GM12878 (cell line): ENCODE measurements at regions of chr4 and their contacts with region 1.

Region 1: GRCh38 chr4:53804719-53805118 is 213.4 kb upstream of the LNX1 start:
- DNase-seq: peak; percentile 12
- ATAC-seq: peak; percentile 98
- H3K4me3 ChIP-seq: no peak overlapping the region
- H3K27ac ChIP-seq: no peak overlapping the region
- H3K4me1 ChIP-seq: 0 out of 2 replicates have a peak, but pooled peaks cover 3% of the 10 kb centered on the region
- H3K27me3 ChIP-seq: no peaks in the 10 kb centered on the region
- CTCF ChIP-seq: peak; percentile 65 to 74 (median 72)
- EP300 ChIP-seq: no peak
- POLR2A ChIP-seq: no peak
- RAD21 ChIP-seq: peak; percentile 77

Region 2: DNA sequence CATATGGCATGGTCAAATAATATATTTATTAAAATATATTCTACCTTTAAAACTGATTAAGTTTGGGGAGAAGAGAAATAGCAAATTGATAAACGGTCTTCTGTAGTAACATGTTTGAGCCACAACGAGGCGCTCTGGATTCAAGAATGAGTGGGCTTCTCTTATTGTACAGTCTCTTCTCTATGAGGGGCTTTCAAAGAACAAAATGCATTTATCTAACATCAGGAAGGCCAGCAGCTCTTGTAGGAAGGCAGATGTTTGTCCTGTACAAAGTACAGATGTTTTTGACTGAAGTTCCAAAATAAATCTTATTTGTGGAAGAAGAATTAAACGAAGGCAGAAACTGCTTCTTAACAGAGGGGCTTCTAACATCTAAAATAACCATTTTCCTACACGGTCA is 789.0 kb before region 1 on chr4:
- CTCF ChIA-PET with region 1: interaction called, 15 read pairs
- POLR2A ChIA-PET with region 1: no interaction called
- RAD21 ChIA-PET with region 1: interaction called, 4 read pairs
- SMC1A ChIA-PET with region 1: interaction called, 5 read pairs
- in situ Hi-C with region 1: no loop called
- intact Hi-C with region 1: loop called (anchors 10 kb)
- DNase-seq: no peak
- ATAC-seq: 0 out of 3 replicates have a peak, but pooled peaks have one; percentile 25
- H3K4me3 ChIP-seq: no peak overlapping the region
- H3K27ac ChIP-seq: no peak overlapping the region
- H3K4me1 ChIP-seq: peaks cover 8% of the 10 kb centered on the region; the same call in 1 of the 2 replicates
- H3K27me3 ChIP-seq: no peaks in the 10 kb centered on the region
- CTCF ChIP-seq: peak; percentile 47 to 67 (median 55)
- EP300 ChIP-seq: no peak
- POLR2A ChIP-seq: no peak
- RAD21 ChIP-seq: peak; percentile 83

Region 3: GRCh38 chr4:53507671-53508286 is 296.9 kb before region 1 on chr4:
- CTCF ChIA-PET with region 1: interaction called, 12 read pairs
- POLR2A ChIA-PET with region 1: no interaction called
- RAD21 ChIA-PET with region 1: interaction called, 10 read pairs
- SMC1A ChIA-PET with region 1: interaction called, 8 read pairs
- in situ Hi-C with region 1: no loop called
- intact Hi-C with region 1: no loop called
- DNase-seq: no peak
- ATAC-seq: peak; percentile 80
- H3K4me3 ChIP-seq: no peak overlapping the region
- H3K27ac ChIP-seq: no peak overlapping the region
- H3K4me1 ChIP-seq: no peaks in the 10 kb centered on the region
- H3K27me3 ChIP-seq: no peaks in the 10 kb centered on the region
- CTCF ChIP-seq: no peak
- EP300 ChIP-seq: no peak
- POLR2A ChIP-seq: no peak
- RAD21 ChIP-seq: no peak

Region 4: DNA sequence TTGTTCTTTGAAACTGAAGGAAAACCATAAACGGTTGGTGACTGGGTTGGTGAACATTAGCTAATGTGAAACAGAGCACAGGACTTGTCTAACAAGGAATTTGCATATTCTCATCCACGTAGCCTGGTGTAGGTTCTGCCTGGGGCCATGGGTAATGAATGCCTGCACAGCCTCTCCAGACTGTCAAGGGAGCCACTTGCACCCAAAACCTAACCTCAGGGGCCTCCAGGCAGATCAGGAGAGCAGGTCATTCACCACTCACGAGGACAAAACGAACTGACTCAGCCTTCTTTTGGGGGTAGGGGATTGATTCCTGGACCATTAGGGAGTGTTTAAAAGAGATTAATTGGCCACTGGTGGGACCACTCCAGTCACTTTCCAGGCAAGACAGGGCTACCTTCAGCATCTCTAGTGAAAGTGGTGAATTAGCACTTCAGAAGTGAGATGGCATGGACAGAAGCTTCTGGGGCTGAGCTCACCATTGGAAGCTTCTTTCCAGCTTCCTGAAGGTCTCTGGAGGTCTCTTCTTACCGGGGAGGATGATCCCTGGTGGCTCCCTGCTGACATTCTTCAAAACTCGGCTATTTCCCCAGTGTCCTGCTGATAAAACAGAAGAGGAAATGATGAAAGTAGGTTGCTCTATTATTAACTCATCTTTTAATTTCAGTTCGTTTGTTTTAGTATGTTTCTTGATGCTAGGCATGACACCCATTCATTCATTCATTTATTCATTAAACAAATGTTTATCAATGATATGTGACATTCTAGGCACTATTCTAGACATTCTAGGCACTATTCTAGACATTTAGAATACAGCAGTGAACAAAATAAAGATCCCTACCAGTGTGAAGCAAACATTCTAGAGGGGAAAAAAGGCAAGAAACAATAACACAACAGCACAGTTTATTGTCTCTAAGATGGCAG is 108.9 kb before region 1 on chr4:
- CTCF ChIA-PET with region 1: interaction called, 11 read pairs
- POLR2A ChIA-PET with region 1: no interaction called
- RAD21 ChIA-PET with region 1: interaction called, 3 read pairs
- SMC1A ChIA-PET with region 1: interaction called, 7 read pairs
- in situ Hi-C with region 1: no loop called
- intact Hi-C with region 1: no loop called
- DNase-seq: peak; percentile 53
- ATAC-seq: peak; percentile 91
- H3K4me3 ChIP-seq: no peak overlapping the region
- H3K27ac ChIP-seq: peak overlapping the region; percentile 0; the same call in 1 of the 2 replicates
- H3K4me1 ChIP-seq: peaks cover 7% of the 10 kb centered on the region
- H3K27me3 ChIP-seq: no peaks in the 10 kb centered on the region
- CTCF ChIP-seq: no peak
- EP300 ChIP-seq: peak; percentile 13 to 34; a peak in 1 of 4 replicates
- POLR2A ChIP-seq: no peak
- RAD21 ChIP-seq: no peak

Region 5: GRCh38 chr4:53748328-53748772 is 56.4 kb before region 1 on chr4:
- CTCF ChIA-PET with region 1: interaction called, 14 read pairs
- POLR2A ChIA-PET with region 1: no interaction called
- RAD21 ChIA-PET with region 1: interaction called, 10 read pairs
- SMC1A ChIA-PET with region 1: interaction called, 15 read pairs
- in situ Hi-C with region 1: no loop called
- intact Hi-C with region 1: no loop called
- DNase-seq: peak; percentile 96
- ATAC-seq: peak; percentile 99
- H3K4me3 ChIP-seq: no peak overlapping the region
- H3K27ac ChIP-seq: peak overlapping the region; percentile 71
- H3K4me1 ChIP-seq: peaks cover 29% of the 10 kb centered on the region
- H3K27me3 ChIP-seq: no peaks in the 10 kb centered on the region
- CTCF ChIP-seq: no peak
- EP300 ChIP-seq: peak; percentile 77 to 79; a peak in 3 of 4 replicates
- POLR2A ChIP-seq: no peak
- RAD21 ChIP-seq: peak; percentile 4; the same call in 1 of the 2 replicates